Posterior vena cava (tissue), 2 donors: ENCODE measurements at regions of chr10 and their contacts with region 1.

Region 1: DNA sequence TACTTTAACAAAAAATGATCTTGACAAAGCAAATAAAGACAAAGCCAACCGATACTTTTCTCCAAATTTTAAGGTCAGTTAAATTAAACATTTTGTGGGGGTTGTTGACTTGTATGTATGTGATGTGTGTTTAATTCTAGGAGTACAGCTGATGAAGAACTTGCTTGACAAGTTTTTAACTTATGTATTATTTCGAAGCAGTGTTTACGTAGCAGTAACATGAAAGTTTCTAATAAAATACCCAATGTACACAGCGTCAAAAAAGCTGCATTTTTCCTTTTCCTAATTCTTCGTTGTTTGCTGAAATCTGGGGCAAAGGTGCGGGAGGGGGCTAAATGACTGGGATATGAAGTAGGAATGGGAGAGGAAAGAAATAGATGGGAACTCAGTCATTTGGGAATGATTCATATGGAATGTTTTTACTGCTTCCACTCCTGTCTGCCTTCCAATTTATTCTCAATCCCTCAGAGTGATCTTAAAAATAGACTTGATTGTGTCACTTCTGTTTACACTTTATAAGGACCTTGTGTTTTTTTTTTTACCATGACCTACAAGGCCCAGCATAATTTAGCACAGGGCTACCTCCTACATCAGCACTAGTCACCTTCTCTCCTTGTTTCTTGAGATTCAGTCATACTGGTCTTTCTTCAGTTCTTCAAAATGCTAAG is 97.8 kb downstream of the PTEN start:
- DNase-seq: no peak

Region 2: GRCh38 chr10:87105446-87106124 is 855.6 kb before region 1 on chr10:
- intact Hi-C with region 1: no loop called
- DNase-seq: no peak

Region 3: DNA sequence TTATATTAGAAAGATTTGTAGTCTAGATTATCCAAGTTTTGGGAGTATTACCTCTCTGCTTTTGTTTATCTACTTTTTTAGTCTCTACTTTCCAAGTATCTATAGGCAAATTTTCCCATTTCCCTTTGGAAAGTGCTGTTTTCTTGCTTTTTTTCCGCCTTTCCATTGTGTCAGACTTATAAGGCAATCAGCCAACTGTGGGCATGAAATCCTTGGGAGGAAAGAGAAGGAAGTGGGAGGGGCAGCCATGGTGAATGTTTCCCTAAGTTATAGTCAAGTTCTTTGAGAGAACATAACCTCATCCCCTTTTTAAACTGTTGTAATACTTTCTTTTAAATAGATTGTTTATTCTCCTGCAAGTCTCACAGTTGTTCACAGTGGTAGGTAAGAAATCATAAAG is 45.2 kb before region 1 on chr10:
- intact Hi-C with region 1: no loop called
- DNase-seq: no peak

Region 4: GRCh38 chr10:87983716-87984115 is 22.5 kb after region 1 on chr10:
- intact Hi-C with region 1: loop called in 1 of 2 experiments (anchors 1 kb)
- DNase-seq: no peak

Region 5: DNA sequence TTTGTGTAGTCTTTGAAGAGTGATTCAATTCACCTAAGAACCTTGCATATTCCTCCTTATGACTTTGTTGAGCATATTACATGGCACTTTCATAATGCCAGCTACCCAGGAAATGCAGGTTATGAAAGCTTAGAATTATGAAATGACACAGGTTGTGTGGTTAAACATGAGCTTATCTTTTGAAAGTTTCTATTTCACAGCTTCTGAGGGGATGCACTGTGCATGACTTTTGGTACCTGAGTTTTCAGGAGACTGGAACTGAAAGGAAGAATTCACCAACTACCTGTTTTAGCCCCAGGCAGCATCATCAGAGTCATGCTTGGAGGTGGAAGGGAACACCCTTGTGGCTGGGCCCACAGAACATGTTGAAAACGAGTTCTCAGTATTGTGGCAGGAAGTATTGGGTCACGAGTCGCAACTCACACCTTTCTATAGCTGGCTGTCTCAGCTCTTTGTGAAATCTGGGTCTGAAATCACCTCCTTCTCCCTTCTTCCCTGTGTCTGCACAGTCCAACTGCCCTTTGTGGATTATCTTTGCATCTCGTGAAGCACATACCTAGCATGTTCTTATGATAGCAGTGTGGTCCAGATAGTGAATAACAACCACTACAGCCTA is 130.4 kb after region 1 on chr10:
- intact Hi-C with region 1: no loop called
- DNase-seq: no peak